Caco-2 (cell line): ENCODE measurements at regions of chr12 and their contacts with region 1.

Region 1: GRCh38 chr12:108009442-108010070 is 119.5 kb upstream of the WSCD2 start:
- DNase-seq: peak; percentile 42 to 66
- H3K4me3 ChIP-seq: no peak overlapping the region
- H3K4me3 Mint-ChIP-seq: peak overlapping the region; percentile 55
- H3K27ac Mint-ChIP-seq: peak overlapping the region; percentile 85
- H3K4me1 ChIP-seq: peaks cover 43% of the 10 kb centered on the region
- H3K4me1 Mint-ChIP-seq: peaks cover 22% of the 10 kb centered on the region
- H3K27me3 ChIP-seq: no peaks in the 10 kb centered on the region
- H3K27me3 Mint-ChIP-seq: no peaks in the 10 kb centered on the region
- CTCF ChIP-seq: no peak

Region 2: DNA sequence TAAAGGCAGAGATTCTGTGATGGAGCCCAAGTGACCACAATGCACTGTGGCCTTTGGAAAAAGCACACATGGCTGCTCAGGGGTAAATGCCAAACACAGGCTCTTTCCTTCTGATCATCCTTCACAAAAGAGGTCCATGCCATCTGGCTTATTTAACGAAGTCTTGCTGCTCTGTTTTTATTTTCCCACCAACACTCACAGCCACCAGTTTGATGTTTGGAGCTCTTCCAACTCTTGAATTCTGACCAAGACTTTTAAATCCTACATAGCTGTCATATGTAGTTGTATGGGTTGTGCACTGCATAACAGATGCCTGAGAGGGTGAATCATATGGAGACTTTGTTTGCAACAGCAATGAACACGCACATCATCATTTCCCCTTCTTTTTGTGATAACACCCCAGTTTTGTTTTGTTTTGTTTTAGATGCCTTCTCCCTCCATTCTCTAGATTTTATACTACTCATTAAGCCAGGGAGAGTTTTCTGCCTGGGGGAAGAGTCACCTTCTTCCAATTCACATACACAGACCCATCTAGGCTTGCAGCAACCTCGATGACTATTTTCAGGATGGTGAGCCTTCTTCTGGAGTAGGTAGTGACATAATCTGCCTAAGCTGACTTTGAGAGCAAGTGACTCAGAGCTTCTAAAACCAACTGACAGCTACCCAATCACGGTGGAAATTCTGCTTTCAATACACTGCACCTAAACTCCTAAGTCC is 25.6 kb before region 1 on chr12:
- CTCF ChIA-PET with region 1: no interaction called
- POLR2A ChIA-PET with region 1: no interaction called
- intact Hi-C with region 1: no loop called
- DNase-seq: no peak
- H3K4me3 ChIP-seq: no peak overlapping the region
- H3K4me3 Mint-ChIP-seq: no peak overlapping the region
- H3K27ac Mint-ChIP-seq: no peak overlapping the region
- H3K4me1 ChIP-seq: no peaks in the 10 kb centered on the region
- H3K4me1 Mint-ChIP-seq: no peaks in the 10 kb centered on the region
- H3K27me3 ChIP-seq: no peaks in the 10 kb centered on the region
- H3K27me3 Mint-ChIP-seq: peaks cover 16% of the 10 kb centered on the region
- CTCF ChIP-seq: no peak

Region 3: DNA sequence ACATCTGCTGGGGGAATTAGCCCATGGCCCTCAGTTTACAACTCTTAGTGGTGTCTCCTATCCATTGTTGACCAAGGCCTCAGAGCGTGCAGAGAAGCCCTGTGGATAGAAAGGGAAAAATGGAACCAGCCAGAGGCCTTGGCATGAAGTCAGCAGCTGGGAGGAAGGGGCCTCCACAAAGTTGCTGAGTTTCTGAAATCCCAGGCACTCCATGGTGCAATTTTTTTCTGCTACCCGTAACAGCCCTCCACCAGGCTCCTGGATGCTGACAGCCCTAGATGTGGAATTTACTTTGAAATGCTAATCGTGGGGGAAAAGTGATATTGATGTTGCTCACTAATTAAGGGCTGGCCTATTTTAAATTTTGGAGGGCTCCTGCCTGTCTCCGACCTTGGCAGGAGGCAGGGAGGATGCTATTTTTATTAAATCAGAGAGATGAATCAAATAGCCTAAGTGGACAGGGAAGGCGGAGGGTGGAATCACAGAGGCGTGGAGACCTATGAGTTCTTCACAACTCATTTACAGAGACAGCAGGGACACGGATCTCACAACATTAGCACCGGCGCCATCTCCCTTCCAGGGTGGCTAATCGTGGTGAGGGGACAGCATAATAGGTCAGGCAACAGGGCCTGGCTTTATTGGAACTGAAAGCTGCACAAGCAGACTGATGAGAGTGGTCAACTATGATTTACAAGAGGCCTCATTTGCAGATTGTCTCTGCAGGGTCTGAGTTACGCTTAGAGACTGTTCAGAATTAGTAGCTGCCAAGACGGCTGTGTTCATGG is 19.7 kb after region 1 on chr12:
- CTCF ChIA-PET with region 1: no interaction called
- POLR2A ChIA-PET with region 1: no interaction called
- intact Hi-C with region 1: no loop called
- DNase-seq: no peak
- H3K4me3 ChIP-seq: no peak overlapping the region
- H3K4me3 Mint-ChIP-seq: no peak overlapping the region
- H3K27ac Mint-ChIP-seq: no peak overlapping the region
- H3K4me1 ChIP-seq: no peaks in the 10 kb centered on the region
- H3K4me1 Mint-ChIP-seq: no peaks in the 10 kb centered on the region
- H3K27me3 ChIP-seq: no peaks in the 10 kb centered on the region
- H3K27me3 Mint-ChIP-seq: peaks cover 1% of the 10 kb centered on the region
- CTCF ChIP-seq: no peak

Region 4: DNA sequence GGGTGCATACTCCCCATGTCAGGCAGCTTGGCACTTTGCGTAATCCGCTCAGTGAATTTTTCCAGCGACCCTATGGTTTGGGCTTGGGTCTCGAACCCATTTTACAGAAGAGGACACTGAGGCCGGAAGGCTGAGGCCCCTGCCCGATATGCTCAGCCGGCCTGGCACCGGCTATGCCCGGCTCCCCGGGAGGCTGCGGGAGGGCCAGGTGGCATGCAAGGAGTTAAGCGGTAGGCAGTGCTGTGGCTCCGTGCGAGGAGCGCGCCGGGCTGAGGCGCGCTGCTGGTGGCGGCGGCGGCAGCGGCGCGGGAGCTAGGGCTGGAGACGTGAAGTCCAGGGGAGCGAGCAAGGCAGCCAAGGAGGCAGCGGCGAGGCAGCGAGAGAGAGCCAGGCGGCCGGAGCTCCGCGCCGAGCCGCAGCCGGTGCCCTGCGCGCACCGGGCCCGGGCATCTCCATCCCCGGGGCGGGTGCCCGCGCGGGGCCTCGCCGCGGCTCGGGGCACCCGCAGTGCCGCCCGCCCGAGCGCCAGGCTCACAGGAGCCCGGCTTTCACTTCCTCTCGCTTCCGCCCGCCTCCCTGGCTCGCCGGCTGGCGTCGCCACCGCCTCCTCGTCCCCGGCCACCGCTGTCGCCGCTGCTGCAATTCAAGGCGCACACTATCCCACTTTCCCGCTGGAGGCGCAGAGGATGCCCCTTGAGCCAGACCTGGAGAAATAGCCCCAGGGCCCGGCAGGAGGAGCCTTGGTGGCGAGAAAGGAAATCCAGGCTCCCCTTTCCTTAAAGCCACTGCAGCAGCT is 119.7 kb after region 1 on chr12 and contains the start of gene WSCD2:
- CTCF ChIA-PET with region 1: no interaction called
- POLR2A ChIA-PET with region 1: no interaction called
- intact Hi-C with region 1: loop called (anchors 1 kb)
- DNase-seq: peak; percentile 78 to 82
- H3K4me3 ChIP-seq: peak within 1 kb of the TSS; percentile 38
- H3K4me3 Mint-ChIP-seq: peak within 1 kb of the TSS; percentile 71
- H3K27ac Mint-ChIP-seq: no peak within 1 kb of the TSS
- H3K4me1 ChIP-seq: no peaks in the 10 kb centered on the region
- H3K4me1 Mint-ChIP-seq: no peaks in the 10 kb centered on the region
- H3K27me3 ChIP-seq: no peaks in the 10 kb centered on the region; the same call in 1 of the 2 replicates
- H3K27me3 Mint-ChIP-seq: peaks cover 21% of the 10 kb centered on the region
- CTCF ChIP-seq: peak; percentile 49 to 65
- total RNA-seq, gene WSCD2: not detected in 2 replicates

Region 5: GRCh38 chr12:108156717-108157116 is 147.2 kb after region 1 on chr12:
- CTCF ChIA-PET with region 1: no interaction called
- POLR2A ChIA-PET with region 1: no interaction called
- intact Hi-C with region 1: no loop called
- DNase-seq: no peak
- H3K4me3 ChIP-seq: no peak overlapping the region
- H3K4me3 Mint-ChIP-seq: no peak overlapping the region
- H3K27ac Mint-ChIP-seq: no peak overlapping the region
- H3K4me1 ChIP-seq: no peaks in the 10 kb centered on the region
- H3K4me1 Mint-ChIP-seq: no peaks in the 10 kb centered on the region
- H3K27me3 ChIP-seq: no peaks in the 10 kb centered on the region
- H3K27me3 Mint-ChIP-seq: peaks cover 16% of the 10 kb centered on the region
- CTCF ChIP-seq: no peak